ENCODE measurements at regions of chr14 and their contacts with region 1.

Region 1: DNA sequence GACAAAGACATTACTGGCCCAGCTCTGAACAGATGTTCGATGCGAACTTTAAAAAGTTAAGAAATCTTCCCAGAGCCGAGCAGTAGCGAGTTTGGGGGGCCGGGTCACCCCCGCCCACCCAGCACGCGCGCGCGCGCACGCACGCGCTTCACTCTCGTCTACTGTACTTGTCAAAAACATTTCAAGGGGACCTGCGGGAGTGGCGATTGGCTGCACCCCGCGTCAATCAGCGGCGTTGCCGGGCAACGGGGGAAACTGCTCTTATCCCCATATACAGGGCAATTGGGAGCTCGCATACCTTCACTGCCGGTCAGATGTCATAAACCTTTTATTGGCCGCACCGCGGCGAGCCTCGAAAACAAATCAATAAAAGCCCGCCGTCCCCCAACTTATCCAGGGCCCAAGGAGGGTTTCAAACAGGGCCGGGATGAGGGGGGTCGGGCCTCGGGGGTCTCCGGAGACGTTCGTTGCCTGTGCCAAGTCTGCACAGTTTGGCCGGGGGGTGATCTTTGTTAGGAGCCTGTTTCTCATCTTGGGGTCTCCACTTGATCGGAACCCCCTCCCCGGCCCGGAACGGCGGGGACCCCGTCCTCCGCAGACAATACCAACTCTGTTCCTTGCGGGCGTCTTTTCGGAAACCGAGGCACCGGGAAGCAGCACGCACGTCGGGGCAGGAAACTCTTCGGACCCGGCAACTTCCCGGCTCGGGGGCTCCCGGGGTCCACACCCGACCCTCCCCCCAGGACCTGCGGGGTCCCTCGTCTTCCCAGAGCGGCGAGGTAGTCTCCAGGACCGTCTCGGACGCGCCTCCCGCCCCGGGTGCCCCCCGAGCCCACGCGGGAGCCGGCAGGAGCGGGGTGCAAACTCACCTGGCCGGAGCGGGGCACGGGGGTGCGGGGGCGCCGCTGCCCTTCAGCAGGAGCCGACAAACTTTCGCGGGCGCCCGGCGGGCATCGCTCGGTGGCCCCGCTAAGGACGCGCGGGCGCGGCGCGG is 734 bp downstream of the FOXN3 start:
- DNase-seq: peak; percentile 97 to 100 (median 99)
- ATAC-seq: peak; percentile 73
- H3K4me3 ChIP-seq: peak overlapping the region; percentile 71
- H3K4me3 Mint-ChIP-seq: peak overlapping the region; percentile 96
- H3K27ac ChIP-seq: peak overlapping the region; percentile 51 to 62
- H3K27ac Mint-ChIP-seq: peak overlapping the region; percentile 96
- H3K4me1 ChIP-seq: peaks cover 26% of the 10 kb centered on the region
- H3K4me1 Mint-ChIP-seq: peaks cover 71% of the 10 kb centered on the region
- H3K27me3 ChIP-seq: no peaks in the 10 kb centered on the region
- H3K27me3 Mint-ChIP-seq: no peaks in the 10 kb centered on the region
- CTCF ChIP-seq: no peak

Region 2: GRCh38 chr14:88824314-88825077 is 591.8 kb before region 1 on chr14 and contains the start of gene TTC8:
- CTCF ChIA-PET with region 1: no interaction called
- POLR2A ChIA-PET with region 1: no interaction called
- intact Hi-C with region 1: loop called in 1 of 2 experiments (anchors 10 kb)
- DNase-seq: peak; percentile 75 to 92 (median 82)
- ATAC-seq: peak; percentile 96
- H3K4me3 ChIP-seq: peak within 1 kb of the TSS; percentile 83
- H3K4me3 Mint-ChIP-seq: peak within 1 kb of the TSS; percentile 86
- H3K27ac ChIP-seq: peak within 1 kb of the TSS; percentile 56 to 90
- H3K27ac Mint-ChIP-seq: peak within 1 kb of the TSS; percentile 96
- H3K4me1 ChIP-seq: peaks cover 7% of the 10 kb centered on the region
- H3K4me1 Mint-ChIP-seq: peaks cover 7% of the 10 kb centered on the region
- H3K27me3 ChIP-seq: no peaks in the 10 kb centered on the region
- H3K27me3 Mint-ChIP-seq: peaks cover 11% of the 10 kb centered on the region
- CTCF ChIP-seq: no peak
- total RNA-seq, gene TTC8: 1.6 to 2.1 TPM

Region 3: DNA sequence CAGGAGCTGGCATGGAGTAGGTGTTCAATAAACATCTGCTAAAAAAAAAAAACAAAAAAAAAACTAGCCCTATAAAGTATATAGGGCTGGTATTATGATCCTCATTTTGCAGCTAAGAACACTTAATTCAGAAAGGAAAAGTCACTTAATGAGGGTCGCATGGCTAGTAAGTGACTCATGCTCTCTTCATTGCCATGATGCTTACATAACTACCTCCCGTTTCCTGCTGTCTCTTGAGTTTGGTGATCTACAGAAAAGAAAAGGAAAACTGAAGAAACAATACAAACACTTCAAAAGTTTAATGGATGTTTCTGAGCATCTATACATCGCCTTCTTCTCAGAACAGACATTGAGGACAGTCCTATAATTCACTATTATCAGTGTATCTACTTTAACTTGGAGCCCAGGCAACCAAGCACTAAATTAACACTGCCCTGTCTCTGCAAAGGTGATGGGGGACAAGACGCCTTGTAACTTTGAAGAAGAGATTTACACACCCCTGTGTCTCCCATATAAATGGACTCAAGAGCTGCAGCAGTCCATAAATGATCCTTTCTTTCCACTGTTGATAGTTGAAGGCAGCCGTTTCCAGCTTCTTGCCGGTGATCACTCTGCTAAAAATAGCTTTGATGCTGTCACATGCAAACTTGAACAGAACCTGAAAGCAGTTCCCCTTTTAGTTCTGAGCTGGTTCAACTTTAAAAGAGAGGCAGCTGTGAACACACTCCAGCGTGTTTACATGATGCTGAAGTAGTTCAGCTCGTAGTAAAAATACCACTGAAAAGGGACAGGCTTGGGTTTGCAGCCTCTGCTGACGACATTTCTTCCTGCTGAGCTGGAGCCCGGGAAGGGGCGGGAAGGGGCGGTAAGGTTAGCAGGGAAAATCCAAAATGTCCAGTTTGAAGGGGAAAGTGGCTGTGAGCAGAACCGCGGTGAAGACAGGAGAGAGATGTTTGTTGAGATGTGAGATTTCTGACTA is 112.6 kb before region 1 on chr14:
- CTCF ChIA-PET with region 1: no interaction called
- POLR2A ChIA-PET with region 1: no interaction called
- intact Hi-C with region 1: loop called in 1 of 2 experiments (anchors 2 kb)
- DNase-seq: peak in 4 of 14 experiments; percentile 10 to 59 (median 52)
- ATAC-seq: peak; percentile 75
- H3K4me3 ChIP-seq: no peak overlapping the region
- H3K4me3 Mint-ChIP-seq: peak overlapping the region; percentile 74
- H3K27ac ChIP-seq: peak overlapping the region in 1 of 2 donors; percentile 52
- H3K27ac Mint-ChIP-seq: peak overlapping the region; percentile 97
- H3K4me1 ChIP-seq: peaks cover 21% of the 10 kb centered on the region
- H3K4me1 Mint-ChIP-seq: peaks cover 73% of the 10 kb centered on the region
- H3K27me3 ChIP-seq: no peaks in the 10 kb centered on the region
- H3K27me3 Mint-ChIP-seq: no peaks in the 10 kb centered on the region
- CTCF ChIP-seq: no peak

Region 4: GRCh38 chr14:89357655-89358297 is 58.5 kb before region 1 on chr14:
- CTCF ChIA-PET with region 1: no interaction called
- POLR2A ChIA-PET with region 1: no interaction called
- intact Hi-C with region 1: no loop called
- DNase-seq: peak in 1 of 14 experiments; percentile 34
- ATAC-seq: no peak
- H3K4me3 ChIP-seq: no peak overlapping the region
- H3K4me3 Mint-ChIP-seq: no peak overlapping the region
- H3K27ac ChIP-seq: peak overlapping the region in 1 of 2 donors; percentile 13
- H3K27ac Mint-ChIP-seq: peak overlapping the region; percentile 43
- H3K4me1 ChIP-seq: peaks cover 16% of the 10 kb centered on the region
- H3K4me1 Mint-ChIP-seq: peaks cover 52% of the 10 kb centered on the region
- H3K27me3 ChIP-seq: no peaks in the 10 kb centered on the region
- H3K27me3 Mint-ChIP-seq: no peaks in the 10 kb centered on the region
- CTCF ChIP-seq: no peak

Region 5: DNA sequence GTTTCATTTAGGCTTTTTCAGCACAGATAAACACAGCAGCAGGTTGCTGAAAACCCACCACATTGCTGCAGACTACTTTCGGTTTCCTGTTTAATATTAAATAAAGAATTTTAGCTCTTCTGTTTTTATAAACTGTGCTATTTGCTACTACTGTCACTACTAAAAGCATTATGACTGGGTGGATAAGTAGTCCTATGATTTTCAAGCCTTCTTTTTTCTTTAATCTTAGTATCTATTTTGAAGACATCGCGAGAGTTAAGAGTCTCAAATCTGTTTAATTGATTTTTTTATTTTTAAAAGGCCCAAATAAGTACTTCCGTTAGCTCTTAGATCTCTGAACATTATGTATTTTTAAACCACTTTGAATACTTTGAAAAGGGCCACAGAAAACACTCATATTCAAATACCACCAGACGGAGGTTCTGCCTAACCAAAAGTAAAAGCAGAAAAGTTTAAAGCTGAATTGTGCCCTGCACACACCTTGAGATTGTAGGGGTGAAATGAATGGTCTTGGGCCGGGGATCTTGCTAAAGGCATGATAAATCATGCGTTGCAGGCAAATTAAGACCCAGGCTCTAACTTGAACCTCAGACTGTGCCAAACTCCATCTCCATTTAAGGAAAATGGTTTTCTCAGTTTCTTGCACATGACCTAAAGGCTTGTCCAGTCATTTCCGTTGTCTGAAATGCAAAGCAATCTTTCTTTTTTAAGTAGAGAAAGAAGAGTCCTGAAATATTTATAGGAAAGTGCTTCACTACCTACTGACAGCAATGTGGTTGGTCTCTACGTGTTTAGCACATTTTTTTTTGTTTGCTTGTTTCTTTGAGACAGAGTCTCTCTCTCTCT is 14.3 kb after region 1 on chr14:
- CTCF ChIA-PET with region 1: interaction called, 3 read pairs
- POLR2A ChIA-PET with region 1: interaction called, 16 read pairs
- intact Hi-C with region 1: loop called in 1 of 2 experiments (anchors 1 kb)
- DNase-seq: peak in 4 of 14 experiments; percentile 23 to 79 (median 76)
- ATAC-seq: peak; percentile 83
- H3K4me3 ChIP-seq: peak overlapping the region; percentile 50
- H3K4me3 Mint-ChIP-seq: peak overlapping the region; percentile 76
- H3K27ac ChIP-seq: peak overlapping the region; percentile 57 to 59
- H3K27ac Mint-ChIP-seq: peak overlapping the region; percentile 80
- H3K4me1 ChIP-seq: peaks cover 24% of the 10 kb centered on the region
- H3K4me1 Mint-ChIP-seq: peaks cover 54% of the 10 kb centered on the region
- H3K27me3 ChIP-seq: no peaks in the 10 kb centered on the region
- H3K27me3 Mint-ChIP-seq: no peaks in the 10 kb centered on the region
- CTCF ChIP-seq: no peak

Region 6: DNA sequence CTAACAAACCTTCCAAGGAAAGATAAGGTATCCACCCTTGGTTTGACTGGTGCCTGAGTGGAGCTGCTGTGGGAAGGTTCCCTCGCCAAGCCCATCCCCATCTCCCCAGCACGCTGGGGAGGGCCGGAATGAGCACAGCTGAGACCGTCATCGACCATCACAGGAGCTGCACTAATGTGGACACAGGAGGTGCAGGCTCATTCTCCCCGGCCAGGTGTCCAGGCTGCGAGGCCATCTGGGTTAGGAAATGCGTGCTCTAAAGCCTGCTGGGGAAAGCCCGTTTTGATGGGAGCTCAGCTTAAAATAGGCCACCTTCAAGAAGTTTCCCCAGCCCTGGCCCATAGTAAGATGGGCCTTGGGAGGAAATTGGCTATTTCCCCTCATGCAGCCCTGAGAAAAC is 36.0 kb after region 1 on chr14:
- CTCF ChIA-PET with region 1: no interaction called
- POLR2A ChIA-PET with region 1: no interaction called
- intact Hi-C with region 1: no loop called
- DNase-seq: no peak
- ATAC-seq: no peak
- H3K4me3 ChIP-seq: no peak overlapping the region
- H3K4me3 Mint-ChIP-seq: no peak overlapping the region
- H3K27ac ChIP-seq: no peak overlapping the region
- H3K27ac Mint-ChIP-seq: no peak overlapping the region
- H3K4me1 ChIP-seq: peaks cover 15% of the 10 kb centered on the region
- H3K4me1 Mint-ChIP-seq: peaks cover 51% of the 10 kb centered on the region
- H3K27me3 ChIP-seq: no peaks in the 10 kb centered on the region
- H3K27me3 Mint-ChIP-seq: no peaks in the 10 kb centered on the region
- CTCF ChIP-seq: no peak

Region 7: DNA sequence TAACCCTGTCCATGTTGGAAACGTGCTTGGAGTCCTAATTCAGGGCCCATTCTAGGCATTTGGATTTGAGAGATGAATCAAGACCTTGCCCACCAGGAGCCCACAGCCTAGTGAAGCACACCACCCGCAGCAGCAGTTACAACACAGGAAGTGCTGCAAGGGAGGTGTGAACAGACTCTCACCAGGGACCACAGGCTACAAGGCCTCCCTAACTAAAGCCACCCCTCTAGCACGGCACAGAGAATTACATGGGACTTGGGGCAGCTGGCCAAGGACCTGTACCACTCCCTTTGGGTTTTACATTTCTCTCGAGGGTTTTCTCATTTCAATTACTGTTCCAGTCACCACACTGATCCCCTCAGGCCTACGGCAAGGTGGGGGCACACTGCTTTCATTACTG is 50.2 kb after region 1 on chr14:
- CTCF ChIA-PET with region 1: no interaction called
- POLR2A ChIA-PET with region 1: no interaction called
- intact Hi-C with region 1: no loop called
- DNase-seq: peak in 5 of 14 experiments; percentile 28 to 74 (median 40)
- ATAC-seq: no peak
- H3K4me3 ChIP-seq: no peak overlapping the region
- H3K4me3 Mint-ChIP-seq: no peak overlapping the region
- H3K27ac ChIP-seq: no peak overlapping the region
- H3K27ac Mint-ChIP-seq: no peak overlapping the region
- H3K4me1 ChIP-seq: peaks cover 26% of the 10 kb centered on the region
- H3K4me1 Mint-ChIP-seq: peaks cover 50% of the 10 kb centered on the region
- H3K27me3 ChIP-seq: no peaks in the 10 kb centered on the region
- H3K27me3 Mint-ChIP-seq: no peaks in the 10 kb centered on the region
- CTCF ChIP-seq: no peak

Region 8: DNA sequence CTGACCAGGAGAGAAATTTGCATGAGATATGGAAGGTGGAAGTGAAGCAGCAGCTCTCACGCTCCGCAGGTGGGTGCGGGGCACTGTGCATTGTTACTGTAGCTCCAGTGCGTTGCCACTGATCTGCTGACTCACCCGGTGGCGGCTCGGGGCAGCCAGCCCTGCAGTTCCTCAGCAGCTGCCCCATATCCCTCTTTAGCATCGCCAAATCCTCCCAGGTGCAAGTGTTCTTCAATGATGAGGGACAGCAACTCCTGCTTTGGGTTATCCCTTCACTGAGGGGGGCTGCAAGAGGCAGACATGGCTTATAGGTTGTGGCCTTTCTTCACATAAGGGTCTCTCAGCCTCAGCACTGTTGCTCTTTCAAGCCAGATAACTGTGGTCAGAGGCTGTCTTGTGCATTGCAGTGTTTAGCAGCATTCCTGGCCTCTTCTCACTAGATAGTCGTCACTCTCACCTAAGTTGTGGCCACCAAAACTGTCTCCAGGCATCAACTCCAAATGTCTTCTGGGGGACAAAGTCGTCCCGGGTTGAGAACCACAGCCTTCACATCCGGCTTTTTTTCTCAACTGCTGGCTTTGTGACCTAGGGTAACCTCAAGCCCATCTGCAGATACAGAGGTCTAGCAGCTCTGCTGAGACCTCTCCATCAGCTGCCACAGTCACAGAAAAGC is 357.5 kb after region 1 on chr14:
- CTCF ChIA-PET with region 1: no interaction called
- POLR2A ChIA-PET with region 1: no interaction called
- intact Hi-C with region 1: loop called (anchors 5 kb)
- DNase-seq: peak; percentile 16 to 78 (median 48)
- ATAC-seq: peak; percentile 87
- H3K4me3 ChIP-seq: peak overlapping the region; percentile 20
- H3K4me3 Mint-ChIP-seq: peak overlapping the region; percentile 62
- H3K27ac ChIP-seq: no peak overlapping the region
- H3K27ac Mint-ChIP-seq: peak overlapping the region; percentile 37
- H3K4me1 ChIP-seq: peaks cover 18% of the 10 kb centered on the region
- H3K4me1 Mint-ChIP-seq: peaks cover 16% of the 10 kb centered on the region
- H3K27me3 ChIP-seq: no peaks in the 10 kb centered on the region
- H3K27me3 Mint-ChIP-seq: no peaks in the 10 kb centered on the region
- CTCF ChIP-seq: no peak

Region 9: DNA sequence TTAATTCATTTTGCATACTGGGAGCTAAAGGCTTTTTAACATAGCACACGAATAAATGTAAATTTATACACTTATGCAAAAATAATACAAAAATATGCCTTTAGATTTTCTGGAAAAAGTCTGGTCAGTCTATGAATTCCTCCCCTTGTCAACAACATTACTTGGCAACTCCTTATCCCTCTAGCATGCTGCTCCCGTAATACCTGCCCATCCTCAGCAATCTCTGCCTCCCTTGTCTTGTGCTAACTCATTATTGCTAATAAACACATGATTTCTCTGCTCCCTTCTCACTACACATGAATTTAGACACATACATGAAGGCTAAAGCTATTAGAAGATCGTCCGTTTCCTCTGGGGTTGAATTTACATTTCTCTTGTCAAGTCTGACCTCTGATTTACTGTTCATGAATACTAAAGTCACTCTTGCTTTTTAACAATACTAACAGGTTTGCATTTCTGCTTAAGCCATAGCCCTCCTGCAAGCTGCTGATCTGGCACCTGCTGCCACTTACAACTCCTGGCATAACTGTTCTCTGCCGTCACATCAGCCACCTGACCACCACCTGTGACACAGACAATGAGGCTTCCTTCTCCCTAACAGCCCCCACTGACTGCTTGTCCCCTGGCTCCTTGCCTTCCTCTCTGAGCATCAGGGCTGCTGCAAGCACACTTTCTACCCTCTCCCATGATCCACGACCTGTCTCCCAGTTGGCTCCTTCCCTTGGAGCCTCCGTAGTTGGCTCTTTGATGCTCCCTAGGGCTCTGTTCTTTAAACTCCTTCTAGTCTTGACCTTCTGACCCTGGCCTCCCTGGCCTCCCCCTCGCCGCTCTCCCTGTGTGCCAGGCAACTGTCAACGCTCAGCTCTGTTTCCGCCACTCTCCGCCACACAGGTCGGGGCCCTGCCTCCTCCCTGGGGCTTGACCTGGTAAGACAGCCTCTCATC is 1158.2 kb after region 1 on chr14:
- CTCF ChIA-PET with region 1: no interaction called
- POLR2A ChIA-PET with region 1: no interaction called
- intact Hi-C with region 1: no loop called
- DNase-seq: no peak
- ATAC-seq: no peak
- H3K4me3 ChIP-seq: no peak overlapping the region
- H3K4me3 Mint-ChIP-seq: no peak overlapping the region
- H3K27ac ChIP-seq: no peak overlapping the region
- H3K27ac Mint-ChIP-seq: no peak overlapping the region
- H3K4me1 ChIP-seq: no peaks in the 10 kb centered on the region
- H3K4me1 Mint-ChIP-seq: no peaks in the 10 kb centered on the region
- H3K27me3 ChIP-seq: no peaks in the 10 kb centered on the region
- H3K27me3 Mint-ChIP-seq: no peaks in the 10 kb centered on the region
- CTCF ChIP-seq: no peak